ENCODE measurements at regions of chrX and their contacts with region 1.

Region 1: DNA sequence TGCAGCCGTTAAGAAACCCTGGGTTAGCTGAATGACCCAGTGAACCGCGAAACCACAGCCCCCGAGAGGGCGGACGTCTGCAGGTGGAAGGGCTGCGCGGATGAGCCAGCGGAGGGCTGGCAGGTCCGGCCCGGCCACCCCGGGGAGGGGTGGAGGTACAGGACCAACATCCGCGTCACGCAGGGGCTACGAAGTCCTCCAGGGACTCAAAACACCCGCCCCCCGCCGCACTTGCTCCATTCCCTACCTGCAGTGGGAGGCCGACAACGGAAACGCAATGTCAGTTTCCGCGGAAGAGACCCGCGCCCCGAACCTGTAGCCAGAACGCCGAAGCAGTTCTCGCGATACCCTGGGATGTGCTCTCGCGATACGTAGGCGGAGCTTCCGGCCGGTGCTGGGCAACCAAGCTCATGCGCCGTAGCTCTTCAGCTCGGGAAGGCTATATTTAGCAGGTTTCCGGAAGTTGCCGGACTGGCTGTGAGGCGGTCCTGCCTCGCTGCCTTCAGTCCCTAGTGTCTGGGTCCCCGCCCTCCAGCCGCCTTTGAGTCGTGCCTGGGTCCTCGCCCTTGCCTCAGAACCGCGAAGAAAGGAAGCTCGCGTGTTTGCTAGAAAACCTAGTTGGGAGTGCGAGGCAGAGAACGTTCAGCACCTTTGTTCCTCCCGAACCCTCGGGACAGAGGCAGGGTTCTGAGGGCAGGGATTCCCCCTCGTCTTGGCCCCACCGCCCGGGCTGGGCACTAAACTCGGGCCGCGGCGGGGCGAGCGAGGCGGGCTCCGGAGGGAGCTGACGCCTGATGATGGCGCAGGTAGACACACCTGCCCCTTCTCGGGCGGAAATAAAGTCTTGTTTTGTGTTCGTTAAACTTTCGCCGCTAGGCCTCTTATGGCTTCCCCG is at the starts of genes OFD1 and TRAPPC2:
- DNase-seq: peak; percentile 86 to 90
- ATAC-seq: peak; percentile 99 to 100 (median 100)
- H3K4me3 ChIP-seq: peak within 1 kb of the TSS; percentile 53 to 95 (median 81)
- H3K27ac ChIP-seq: peak within 1 kb of the TSS; percentile 75 to 93 (median 90)
- H3K4me1 ChIP-seq: peaks cover 0 to 43% (median 11%) of the 10 kb centered on the region in 9 donors
- H3K27me3 ChIP-seq: peaks cover 0 to 30% (median 0%) of the 10 kb centered on the region in 7 donors
- CTCF ChIP-seq: no peak
- total RNA-seq, gene OFD1: 7.8 to 11.4 (median 9.2) TPM
- total RNA-seq, gene TRAPPC2: 4.9 to 9.3 (median 6.1) TPM

Region 2: GRCh38 chrX:13653022-13653693 is 81.4 kb before region 1 on chrX and contains the start of gene TCEANC:
- intact Hi-C with region 1: loop called in 4 of 10 experiments (anchors 2 to 5 kb)
- DNase-seq: peak; percentile 93 to 94
- ATAC-seq: peak; percentile 99 to 100 (median 100)
- H3K4me3 ChIP-seq: peak within 1 kb of the TSS; percentile 43 to 73 (median 66)
- H3K27ac ChIP-seq: peak within 1 kb of the TSS; percentile 87 to 96 (median 94)
- H3K4me1 ChIP-seq: peaks cover 0 to 26% (median 12%) of the 10 kb centered on the region in 9 donors
- H3K27me3 ChIP-seq: peaks cover 0 to 35% (median 0%) of the 10 kb centered on the region in 7 donors
- CTCF ChIP-seq: no peak
- total RNA-seq, gene TCEANC: 3.3 to 7.2 (median 4.6) TPM

Region 3: DNA sequence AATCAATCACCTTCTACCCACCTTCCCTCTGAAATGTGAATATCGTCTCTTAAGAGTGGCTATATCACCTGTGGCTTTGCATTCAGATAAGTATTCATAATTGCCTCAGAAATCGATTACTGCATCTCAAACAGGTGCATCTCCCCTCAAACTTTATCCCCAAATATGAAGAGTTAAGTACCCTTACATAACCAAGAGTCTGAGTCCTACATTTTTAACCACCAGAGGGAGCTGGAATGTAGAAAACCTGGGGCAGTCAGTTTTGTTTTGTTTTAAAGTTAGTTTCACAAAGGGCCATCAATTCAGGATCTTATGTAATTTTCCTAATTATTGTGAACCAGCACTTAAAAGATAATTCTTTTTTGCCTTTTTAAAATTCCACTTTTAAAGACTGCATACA is 75.9 kb before region 1 on chrX:
- intact Hi-C with region 1: loop called in 4 of 10 experiments (anchors 2 to 5 kb)
- DNase-seq: peak in 1 of 2 donors; percentile 11
- ATAC-seq: peak in 2 of 8 donors; percentile 53 to 67
- H3K4me3 ChIP-seq: no peak overlapping the region
- H3K27ac ChIP-seq: peak overlapping the region in 8 of 10 donors; percentile 9 to 69 (median 40)
- H3K4me1 ChIP-seq: peaks cover 0 to 23% (median 8%) of the 10 kb centered on the region in 9 donors
- H3K27me3 ChIP-seq: peaks cover 0 to 4% (median 0%) of the 10 kb centered on the region in 7 donors
- CTCF ChIP-seq: peak; percentile 37 to 71 (median 69)

Region 4: DNA sequence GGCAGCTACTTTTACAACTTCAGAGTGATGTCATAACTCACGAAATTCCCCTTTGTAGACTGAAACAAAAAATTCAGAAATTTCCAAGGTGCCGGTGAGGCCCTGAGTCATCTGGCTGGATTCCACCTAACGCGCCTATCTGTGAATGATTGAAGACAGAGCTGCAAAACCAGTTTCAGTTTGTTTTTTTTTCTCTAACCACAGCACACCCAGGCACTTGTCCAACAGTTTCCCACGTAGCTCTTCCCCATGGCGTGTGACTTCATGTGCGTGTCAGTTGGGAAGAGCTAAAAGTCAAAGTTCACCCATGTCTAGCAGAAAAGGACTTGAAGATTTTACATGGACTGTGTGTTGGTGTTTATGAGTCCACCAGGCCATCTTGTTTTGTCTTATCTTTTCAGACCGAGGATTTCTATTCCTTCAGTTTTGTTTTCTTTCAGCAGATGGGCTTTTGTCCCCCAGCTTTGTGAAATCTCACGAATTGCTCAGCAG is 65.2 kb before region 1 on chrX:
- intact Hi-C with region 1: loop called in 1 of 10 experiments (anchors 5 kb)
- DNase-seq: peak in 1 of 2 donors; percentile 59
- ATAC-seq: peak in 7 of 8 donors; percentile 67 to 91 (median 85)
- H3K4me3 ChIP-seq: no peak overlapping the region
- H3K27ac ChIP-seq: peak overlapping the region in 8 of 10 donors; percentile 10 to 64 (median 54)
- H3K4me1 ChIP-seq: peaks cover 0 to 14% (median 0%) of the 10 kb centered on the region in 9 donors
- H3K27me3 ChIP-seq: peaks cover 0 to 30% (median 0%) of the 10 kb centered on the region in 7 donors
- CTCF ChIP-seq: no peak

Region 5: GRCh38 chrX:13688958-13689740 is 45.4 kb before region 1 on chrX and contains the start of gene RAB9A:
- intact Hi-C with region 1: loop called in 4 of 10 experiments (anchors 1 to 5 kb)
- DNase-seq: peak; percentile 85 to 89
- ATAC-seq: peak; percentile 98 to 99 (median 99)
- H3K4me3 ChIP-seq: peak within 1 kb of the TSS; percentile 58 to 83 (median 72)
- H3K27ac ChIP-seq: peak within 1 kb of the TSS; percentile 89 to 97 (median 94)
- H3K4me1 ChIP-seq: peaks cover 0 to 47% (median 25%) of the 10 kb centered on the region in 9 donors
- H3K27me3 ChIP-seq: peaks cover 0 to 52% (median 0%) of the 10 kb centered on the region in 7 donors
- CTCF ChIP-seq: no peak
- total RNA-seq, gene RAB9A: 16.9 to 28.9 (median 20.9) TPM

Measured in heart right ventricle (tissue), 16 donors.